Heart left ventricle (tissue), 16 donors: ENCODE measurements at regions of chr7 and their contacts with region 1.

Region 1: GRCh38 chr7:140810830-140811556 is 113.7 kb downstream of the BRAF start:
- DNase-seq: peak in 4 of 5 donors; percentile 34 to 59 (median 46)
- ATAC-seq: peak; percentile 71 to 94 (median 88)
- H3K4me3 ChIP-seq: no peak overlapping the region
- H3K27ac ChIP-seq: no peak overlapping the region
- H3K4me1 ChIP-seq: peaks cover 0 to 10% (median 2%) of the 10 kb centered on the region in 12 donors
- H3K27me3 ChIP-seq: no peaks in the 10 kb centered on the region
- CTCF ChIP-seq: peak; percentile 63 to 87 (median 74)
- POLR2A ChIP-seq: no peak

Region 2: DNA sequence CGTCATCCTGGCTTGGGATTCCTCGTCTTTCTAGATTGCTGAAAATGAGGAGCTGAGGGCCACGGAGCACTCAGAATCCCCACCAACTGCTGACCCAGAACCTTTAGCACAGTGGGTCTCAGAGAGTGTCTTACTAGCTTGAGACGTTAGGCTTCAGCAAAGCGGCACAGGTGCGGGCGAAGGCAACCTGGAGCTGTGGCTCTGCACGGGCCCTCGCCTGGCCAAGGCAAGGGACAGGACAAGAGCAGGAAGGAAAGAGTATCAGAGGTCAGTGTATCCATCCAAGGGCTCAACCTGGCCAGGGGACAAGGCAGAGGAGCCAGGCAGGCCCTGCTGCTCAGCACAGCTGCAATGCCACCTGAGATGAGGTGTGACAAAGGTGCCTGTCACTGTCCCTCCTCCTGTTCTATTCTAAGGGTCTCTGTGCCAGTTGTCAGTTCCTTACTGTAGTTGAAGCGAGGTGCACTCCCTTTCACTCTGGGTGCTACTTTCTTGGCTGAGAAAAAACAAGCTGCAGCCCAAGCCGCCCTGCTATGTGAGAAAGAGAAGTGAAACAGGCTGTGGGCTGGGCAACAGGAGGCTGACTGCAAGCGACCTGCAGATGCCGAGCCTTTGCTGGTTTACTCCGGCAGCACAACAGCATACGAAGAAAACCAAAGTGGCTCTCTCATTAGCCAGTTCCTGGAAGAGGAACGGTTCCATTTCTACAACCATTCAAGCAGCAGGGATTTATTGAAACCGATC is 601.0 kb before region 1 on chr7:
- intact Hi-C with region 1: no loop called
- DNase-seq: peak in 3 of 5 donors; percentile 32 to 67 (median 37)
- ATAC-seq: peak in 2 of 4 donors; percentile 29 to 65
- H3K4me3 ChIP-seq: peak overlapping the region in 1 of 12 donors; percentile 17
- H3K27ac ChIP-seq: peak overlapping the region in 1 of 12 donors; percentile 84
- H3K4me1 ChIP-seq: peaks cover 0 to 34% (median 0%) of the 10 kb centered on the region in 12 donors
- H3K27me3 ChIP-seq: no peaks in the 10 kb centered on the region
- CTCF ChIP-seq: no peak
- POLR2A ChIP-seq: no peak

Region 3: DNA sequence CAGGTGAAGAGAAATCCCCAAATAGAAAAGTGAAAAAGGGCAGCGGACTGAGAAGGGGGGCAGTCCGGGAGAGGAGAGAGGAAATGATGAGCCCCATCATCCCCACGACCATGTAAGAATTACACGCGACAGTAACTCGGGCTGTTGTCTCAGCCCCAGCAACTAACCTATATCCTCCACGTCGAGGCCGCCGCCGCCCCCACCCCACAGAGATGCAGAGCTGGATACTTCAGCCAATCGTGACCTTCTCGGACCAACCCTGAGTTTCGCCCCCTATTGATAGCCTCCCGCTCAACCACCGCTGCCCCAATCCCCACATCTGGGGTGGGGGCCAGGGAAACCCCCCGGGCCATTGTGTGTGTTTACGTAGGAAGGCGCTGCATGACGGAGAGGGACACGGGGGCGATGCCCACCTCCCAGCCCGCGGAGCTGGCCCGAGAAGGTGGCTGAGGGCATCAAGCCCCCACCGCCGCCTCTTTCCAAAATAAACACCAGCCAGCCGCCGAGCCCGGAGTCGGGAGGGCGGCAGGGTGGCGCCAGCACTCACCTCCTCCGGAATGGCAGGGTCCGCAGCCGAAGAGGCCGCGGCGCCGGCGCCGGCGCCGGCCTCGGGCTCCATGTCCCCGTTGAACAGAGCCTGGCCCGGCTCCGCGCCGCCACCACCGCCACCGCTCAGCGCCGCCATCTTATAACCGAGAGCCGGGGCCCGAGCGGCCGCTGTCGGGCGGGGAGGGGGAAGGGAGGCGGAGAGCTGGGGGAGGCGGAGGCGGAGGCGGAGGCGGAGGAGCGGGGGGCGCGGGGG is 113.2 kb after region 1 on chr7:
- intact Hi-C with region 1: loop called in 9 of 10 experiments (anchors 2 to 10 kb)
- DNase-seq: peak; percentile 78 to 92 (median 83)
- ATAC-seq: peak; percentile 57 to 86 (median 80)
- H3K4me3 ChIP-seq: peak overlapping the region; percentile 75 to 99 (median 92)
- H3K27ac ChIP-seq: peak overlapping the region; percentile 95 to 100 (median 98)
- H3K4me1 ChIP-seq: peaks cover 0 to 46% (median 31%) of the 10 kb centered on the region in 12 donors
- H3K27me3 ChIP-seq: no peaks in the 10 kb centered on the region
- CTCF ChIP-seq: peak in 9 of 12 donors; percentile 19 to 61 (median 43)
- POLR2A ChIP-seq: peak in 1 of 2 donors; percentile 26

Region 4: GRCh38 chr7:141220263-141220880 is 409.4 kb after region 1 on chr7:
- intact Hi-C with region 1: loop called in 5 of 10 experiments (anchors 5 to 10 kb)
- DNase-seq: no peak
- ATAC-seq: no peak
- H3K4me3 ChIP-seq: no peak overlapping the region
- H3K27ac ChIP-seq: no peak overlapping the region
- H3K4me1 ChIP-seq: no peaks in the 10 kb centered on the region
- H3K27me3 ChIP-seq: no peaks in the 10 kb centered on the region
- CTCF ChIP-seq: peak in 5 of 12 donors; percentile 12 to 34 (median 20)
- POLR2A ChIP-seq: no peak

Region 5: DNA sequence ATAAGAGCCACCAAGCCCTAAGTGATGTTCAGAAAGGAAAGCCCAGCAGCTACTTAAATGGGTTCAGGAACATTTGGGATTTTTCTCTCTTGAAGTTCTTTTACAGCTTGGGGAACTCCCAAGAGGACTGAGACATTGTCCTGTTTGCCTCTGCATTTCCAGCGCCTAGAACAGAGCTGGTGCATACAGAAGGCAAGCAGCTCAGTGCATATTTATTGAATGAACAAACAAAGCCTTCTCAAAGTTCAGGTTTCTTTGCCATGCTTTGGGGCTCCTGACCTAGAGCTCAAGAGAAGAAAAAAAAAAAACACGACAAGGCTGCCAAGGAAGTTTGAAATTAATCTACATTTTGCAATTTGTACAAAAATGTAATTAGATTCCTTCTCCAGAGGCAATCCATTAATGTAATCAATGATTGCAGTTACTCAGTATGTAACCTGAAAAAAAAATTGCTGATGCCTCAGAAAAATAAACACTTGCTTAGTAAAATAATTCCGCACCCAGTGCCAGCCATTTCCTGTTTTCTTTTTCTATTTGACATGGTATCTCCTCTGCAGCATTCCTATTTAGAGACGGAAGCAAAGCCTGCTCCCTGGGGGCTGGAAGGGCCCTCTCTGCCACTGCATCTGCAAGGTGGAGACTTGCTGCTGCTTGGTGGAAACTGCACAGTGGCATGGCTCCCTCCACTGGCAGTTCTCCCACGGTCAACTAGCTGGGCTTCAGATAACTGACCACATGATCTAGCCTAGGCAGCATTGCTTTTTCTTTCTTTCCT is 420.2 kb after region 1 on chr7:
- intact Hi-C with region 1: loop called in 6 of 10 experiments (anchors 5 to 10 kb)
- DNase-seq: peak in 3 of 5 donors; percentile 25 to 47 (median 29)
- ATAC-seq: peak; percentile 61 to 86 (median 78)
- H3K4me3 ChIP-seq: no peak overlapping the region
- H3K27ac ChIP-seq: no peak overlapping the region
- H3K4me1 ChIP-seq: peaks cover 0 to 6% (median 0%) of the 10 kb centered on the region in 12 donors
- H3K27me3 ChIP-seq: no peaks in the 10 kb centered on the region
- CTCF ChIP-seq: peak in 11 of 12 donors; percentile 9 to 57 (median 31)
- POLR2A ChIP-seq: no peak